Activated T-helper 2 cell treated with anti-CD3 and anti-CD28 coated beads, Interferon-gamma antibody, Interleukin-2, Interleukin-4, amounts not matched to agents 10 μg/mL and 5 μg/mL and 100 μg/mL, durations not matched to agents 14 hours and 24 hours and 36 hours (primary cell): ENCODE measurements at regions of chr7 and their contacts with region 1.

Region 1: GRCh38 chr7:149239345-149240191 is at the start of gene ZNF212:
- DNase-seq: peak; percentile 83
- H3K4me3 Mint-ChIP-seq: peak within 1 kb of the TSS; percentile 91
- H3K27ac Mint-ChIP-seq: peak within 1 kb of the TSS; percentile 87
- H3K4me1 Mint-ChIP-seq: peaks cover 26% of the 10 kb centered on the region
- H3K27me3 Mint-ChIP-seq: no peaks in the 10 kb centered on the region
- total RNA-seq, gene ZNF212: 18.4 and 20.1 TPM in 2 replicates

Region 2: GRCh38 chr7:149195180-149196150 is 44.1 kb before region 1 on chr7 and contains the start of gene ZNF282:
- intact Hi-C with region 1: loop called (anchors 2 kb)
- DNase-seq: peak; percentile 76
- H3K4me3 Mint-ChIP-seq: peak within 1 kb of the TSS; percentile 89
- H3K27ac Mint-ChIP-seq: peak within 1 kb of the TSS; percentile 88
- H3K4me1 Mint-ChIP-seq: peaks cover 41% of the 10 kb centered on the region
- H3K27me3 Mint-ChIP-seq: no peaks in the 10 kb centered on the region
- total RNA-seq, gene ZNF282: 116 and 118 TPM in 2 replicates

Region 3: GRCh38 chr7:149209518-149210269 is 29.9 kb before region 1 on chr7:
- intact Hi-C with region 1: no loop called
- DNase-seq: peak; percentile 70
- H3K4me3 Mint-ChIP-seq: peak overlapping the region; percentile 32
- H3K27ac Mint-ChIP-seq: peak overlapping the region; percentile 94
- H3K4me1 Mint-ChIP-seq: peaks cover 31% of the 10 kb centered on the region
- H3K27me3 Mint-ChIP-seq: no peaks in the 10 kb centered on the region